Calu3 (cell line): ENCODE measurements at regions of chr11 and their contacts with region 1.

Region 1: DNA sequence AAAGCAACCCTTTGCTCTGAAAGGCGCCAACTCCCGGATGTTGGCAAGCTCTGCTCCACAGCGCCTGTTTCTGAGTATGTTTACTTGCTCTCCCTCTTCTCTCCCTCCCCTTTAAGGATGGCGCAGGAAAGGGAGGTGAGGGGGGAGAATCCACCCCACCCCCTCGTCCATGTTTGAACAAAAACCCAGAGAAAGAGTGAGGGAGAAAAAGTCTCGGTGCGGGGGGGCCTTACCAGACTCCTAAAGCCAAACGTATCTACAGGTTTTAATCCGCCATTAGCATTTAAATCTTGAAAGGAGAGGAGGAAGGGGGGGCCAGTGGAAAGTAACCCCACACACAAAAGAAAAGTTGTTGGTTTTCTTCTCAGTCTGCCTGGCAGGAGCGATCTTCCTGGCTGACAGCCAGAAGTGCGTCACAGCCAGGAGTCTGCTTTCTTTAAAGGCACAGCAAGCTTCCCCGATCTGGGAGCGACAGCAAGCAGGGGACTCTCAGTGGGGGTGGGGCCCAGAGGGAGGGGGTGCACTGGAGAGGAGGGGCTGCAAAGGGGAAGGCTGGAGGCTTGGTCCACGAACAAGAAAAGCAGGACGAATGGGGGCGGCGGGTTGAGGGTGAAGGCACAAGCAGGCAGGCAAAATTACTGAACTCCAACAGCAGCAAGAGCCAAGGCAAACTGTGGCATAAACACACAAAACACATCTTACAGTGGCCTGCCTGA is 39.5 kb downstream of the NUMA1 start:
- DNase-seq: peak; percentile 86
- H3K4me3 Mint-ChIP-seq: no peak overlapping the region
- H3K27ac Mint-ChIP-seq: no peak overlapping the region
- H3K4me1 Mint-ChIP-seq: peaks cover 27% of the 10 kb centered on the region
- H3K27me3 Mint-ChIP-seq: no peaks in the 10 kb centered on the region
- CTCF ChIP-seq: no peak

Region 2: GRCh38 chr11:71962428-71963038 is 78.4 kb before region 1 on chr11:
- CTCF ChIA-PET with region 1: no interaction called
- intact Hi-C with region 1: no loop called
- DNase-seq: no peak
- H3K4me3 Mint-ChIP-seq: no peak overlapping the region
- H3K27ac Mint-ChIP-seq: no peak overlapping the region
- H3K4me1 Mint-ChIP-seq: peaks cover 11% of the 10 kb centered on the region
- H3K27me3 Mint-ChIP-seq: no peaks in the 10 kb centered on the region
- CTCF ChIP-seq: no peak

Region 3: DNA sequence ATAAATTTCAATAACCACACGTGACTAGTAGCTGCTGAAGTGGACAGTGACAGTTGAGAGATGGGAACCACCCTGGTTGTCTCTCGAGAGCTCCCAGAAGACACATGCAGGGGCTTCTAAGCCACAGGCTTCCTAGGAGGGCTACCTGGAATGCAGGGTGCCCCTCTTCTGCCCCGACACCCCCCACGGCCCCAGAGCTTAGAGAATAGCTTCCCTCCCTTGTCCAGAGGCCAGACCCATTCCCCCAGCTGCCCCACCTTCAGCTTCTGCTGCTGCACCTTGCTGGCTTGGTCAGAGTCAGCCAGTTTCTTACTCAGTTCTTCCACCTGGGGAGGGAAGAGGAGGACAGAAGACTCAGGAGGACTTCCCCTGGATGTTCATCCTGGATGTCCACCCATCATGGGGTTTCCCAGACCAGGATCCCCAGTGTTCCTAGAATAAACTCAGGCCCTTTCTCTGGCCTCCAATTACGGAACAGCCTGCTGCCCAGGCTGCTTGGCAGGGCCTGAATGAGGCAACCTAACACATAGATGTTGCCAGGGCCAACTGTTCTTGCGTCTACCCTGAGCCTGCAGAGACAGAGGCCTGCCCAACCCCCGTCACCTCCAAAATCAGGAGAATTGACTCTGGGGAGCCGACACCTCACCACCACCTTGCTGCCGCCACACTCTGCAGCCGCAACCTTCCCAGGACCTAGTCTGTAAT is 30.2 kb before region 1 on chr11:
- CTCF ChIA-PET with region 1: no interaction called
- intact Hi-C with region 1: no loop called
- DNase-seq: no peak
- H3K4me3 Mint-ChIP-seq: no peak overlapping the region
- H3K27ac Mint-ChIP-seq: no peak overlapping the region
- H3K4me1 Mint-ChIP-seq: no peaks in the 10 kb centered on the region
- H3K27me3 Mint-ChIP-seq: no peaks in the 10 kb centered on the region
- CTCF ChIP-seq: no peak

Region 4: DNA sequence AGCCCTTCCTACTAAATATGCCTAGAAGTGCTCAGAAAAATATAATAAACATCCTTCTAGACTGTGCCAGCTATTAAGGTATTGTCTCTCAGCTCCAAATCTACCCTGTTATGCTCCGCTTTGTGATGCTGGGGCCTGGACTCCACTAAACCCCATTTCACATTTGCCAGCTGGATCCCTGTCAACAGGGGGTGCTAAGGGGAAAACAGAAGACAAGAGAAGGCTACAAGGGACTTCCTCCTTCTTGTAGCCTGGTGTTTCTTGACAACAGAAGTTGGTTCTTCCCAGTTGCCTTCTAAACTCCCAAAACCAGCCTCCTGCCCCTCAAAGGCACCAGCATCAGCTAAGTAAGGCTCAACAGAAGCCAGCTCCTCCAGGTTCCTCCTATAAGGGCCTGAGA is 34.2 kb after region 1 on chr11:
- CTCF ChIA-PET with region 1: interaction called, 3 read pairs
- intact Hi-C with region 1: loop called (anchors 5 kb)
- DNase-seq: peak; percentile 23
- H3K4me3 Mint-ChIP-seq: no peak overlapping the region
- H3K27ac Mint-ChIP-seq: no peak overlapping the region
- H3K4me1 Mint-ChIP-seq: peaks cover 47% of the 10 kb centered on the region
- H3K27me3 Mint-ChIP-seq: no peaks in the 10 kb centered on the region
- CTCF ChIP-seq: no peak

Region 5: DNA sequence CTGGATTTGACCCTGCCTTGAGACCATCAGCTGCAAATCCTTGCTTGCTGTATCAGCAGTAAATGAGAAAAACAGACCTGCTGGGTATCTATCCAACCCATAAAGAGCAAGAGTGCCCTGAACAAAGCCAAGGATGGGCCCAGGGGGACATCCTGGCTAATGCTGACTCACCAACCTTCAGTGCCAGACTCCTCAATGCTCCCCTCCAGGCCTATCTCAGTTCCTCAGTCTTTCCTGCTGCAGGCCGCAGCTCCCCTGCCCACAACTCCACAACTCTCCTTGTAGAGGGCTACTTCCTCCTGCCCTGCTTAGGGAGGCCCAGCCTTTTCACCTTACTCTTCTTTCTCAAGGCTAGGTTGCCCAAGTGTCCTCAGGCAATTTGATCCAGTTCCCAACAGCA is 59.6 kb after region 1 on chr11:
- CTCF ChIA-PET with region 1: no interaction called
- intact Hi-C with region 1: no loop called
- DNase-seq: no peak
- H3K4me3 Mint-ChIP-seq: no peak overlapping the region
- H3K27ac Mint-ChIP-seq: peak overlapping the region; percentile 71
- H3K4me1 Mint-ChIP-seq: peaks cover 20% of the 10 kb centered on the region
- H3K27me3 Mint-ChIP-seq: no peaks in the 10 kb centered on the region
- CTCF ChIP-seq: no peak